ENCODE measurements at regions of chr16 and their contacts with region 1.

Region 1: GRCh38 chr16:49592546-49593423 is 219.2 kb downstream of the C16orf78 start:
- DNase-seq: peak; percentile 51 to 75 (median 70)
- H3K4me3 ChIP-seq: no peak overlapping the region
- H3K27ac ChIP-seq: no peak overlapping the region
- H3K4me1 ChIP-seq: peaks cover 12 to 60% (median 49%) of the 10 kb centered on the region in 4 experiments
- H3K27me3 ChIP-seq: no peaks in the 10 kb centered on the region

Region 2: GRCh38 chr16:49472598-49472997 is 120.2 kb before region 1 on chr16:
- CTCF ChIA-PET with region 1: no interaction called
- POLR2A ChIA-PET with region 1: no interaction called
- DNase-seq: no peak
- H3K4me3 ChIP-seq: no peak overlapping the region
- H3K27ac ChIP-seq: no peak overlapping the region
- H3K4me1 ChIP-seq: no peaks in the 10 kb centered on the region
- H3K27me3 ChIP-seq: no peaks in the 10 kb centered on the region

Region 3: GRCh38 chr16:49491771-49492761 is 100.7 kb before region 1 on chr16:
- CTCF ChIA-PET with region 1: interaction called, 20 read pairs
- POLR2A ChIA-PET with region 1: no interaction called
- DNase-seq: peak; percentile 38 to 57 (median 55)
- H3K4me3 ChIP-seq: peak overlapping the region in 3 of 7 experiments; percentile 41 to 51 (median 45)
- H3K27ac ChIP-seq: no peak overlapping the region
- H3K4me1 ChIP-seq: peaks cover 0 to 43% (median 25%) of the 10 kb centered on the region in 4 experiments
- H3K27me3 ChIP-seq: no peaks in the 10 kb centered on the region

Region 4: DNA sequence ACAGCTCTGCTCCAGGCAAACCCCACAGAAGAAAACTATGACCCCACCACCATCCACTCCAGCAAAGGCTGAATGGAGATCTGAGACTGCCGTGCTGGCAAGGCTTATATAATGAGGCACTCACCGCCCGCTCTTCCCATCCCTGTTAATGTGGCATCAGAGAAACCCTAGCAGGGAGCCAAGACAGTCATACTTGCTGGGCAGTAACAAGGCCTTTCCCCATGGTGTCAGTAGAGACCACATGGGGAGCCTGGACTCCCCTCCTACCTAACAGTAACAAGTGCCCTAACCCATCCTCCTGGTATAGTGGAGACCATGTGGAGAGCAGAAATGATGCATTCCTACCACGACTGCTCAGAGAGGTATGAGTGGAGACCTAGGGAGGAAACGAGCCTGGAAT is 16.0 kb after region 1 on chr16:
- CTCF ChIA-PET with region 1: interaction called, 12 read pairs
- POLR2A ChIA-PET with region 1: no interaction called
- DNase-seq: peak; percentile 57 to 76 (median 72)
- H3K4me3 ChIP-seq: peak overlapping the region in 1 of 7 experiments; percentile 14
- H3K27ac ChIP-seq: no peak overlapping the region
- H3K4me1 ChIP-seq: peaks cover 7 to 22% (median 13%) of the 10 kb centered on the region in 4 experiments
- H3K27me3 ChIP-seq: no peaks in the 10 kb centered on the region

Region 5: DNA sequence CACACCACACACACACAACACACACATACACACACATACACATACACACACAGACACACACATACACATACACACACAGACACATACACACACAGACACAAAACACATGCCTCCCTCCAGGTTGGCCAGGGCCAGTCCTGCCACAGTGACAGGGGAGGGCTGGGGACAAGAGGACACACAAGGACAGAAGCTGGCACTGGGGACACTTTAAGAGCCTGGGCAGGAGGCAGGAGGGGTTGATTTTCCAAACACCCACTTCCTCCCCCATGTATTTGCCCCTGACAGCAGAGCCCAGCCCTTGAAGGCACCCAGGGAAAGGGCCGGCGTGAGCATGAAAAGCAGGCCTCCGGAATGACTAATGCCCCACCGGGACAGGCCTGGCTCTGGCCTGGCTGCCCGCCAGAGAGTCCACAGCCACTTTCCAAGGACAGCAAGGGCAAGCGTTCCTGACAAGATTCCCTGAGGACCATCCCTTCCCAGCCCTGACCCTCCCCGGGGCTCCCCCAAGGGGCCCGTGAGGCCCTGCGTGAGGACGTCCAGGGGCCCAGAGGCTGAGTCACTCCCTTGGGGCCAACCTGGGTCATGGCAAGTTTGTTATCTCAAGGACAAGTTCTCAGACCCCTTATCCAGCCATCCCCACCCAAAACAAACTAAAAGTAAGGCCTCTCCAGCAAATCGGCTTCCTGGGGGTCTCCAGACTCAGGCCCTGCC is 27.5 kb after region 1 on chr16:
- CTCF ChIA-PET with region 1: no interaction called
- POLR2A ChIA-PET with region 1: no interaction called
- DNase-seq: no peak
- H3K4me3 ChIP-seq: no peak overlapping the region
- H3K27ac ChIP-seq: no peak overlapping the region
- H3K4me1 ChIP-seq: peaks cover 0 to 8% (median 0%) of the 10 kb centered on the region in 4 experiments
- H3K27me3 ChIP-seq: no peaks in the 10 kb centered on the region

Region 6: DNA sequence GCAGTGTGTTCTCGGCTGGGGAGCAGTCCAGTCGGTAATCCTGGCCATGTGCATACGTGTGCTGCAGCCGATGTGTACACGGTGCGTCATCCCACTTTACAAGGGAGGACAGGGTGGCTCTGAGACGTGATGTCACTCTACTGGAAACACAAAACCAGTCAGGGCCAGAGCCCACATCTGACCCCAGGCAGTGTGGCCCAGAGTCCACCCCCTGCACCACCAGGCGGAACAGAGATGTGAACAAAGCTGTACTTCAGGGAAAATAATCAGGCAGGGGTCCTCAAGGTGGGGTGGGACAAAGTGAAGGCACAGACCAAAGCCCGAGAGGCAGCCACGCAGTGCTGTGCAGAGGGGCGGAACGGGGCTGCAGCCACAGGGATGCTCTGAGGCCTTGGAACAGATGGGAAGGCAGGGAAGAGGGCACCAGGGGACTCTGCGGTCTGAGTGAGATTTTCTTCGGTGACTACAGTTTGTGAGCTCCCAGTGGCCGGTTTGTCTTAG is 81.6 kb after region 1 on chr16:
- CTCF ChIA-PET with region 1: no interaction called
- POLR2A ChIA-PET with region 1: no interaction called
- DNase-seq: no peak
- H3K4me3 ChIP-seq: no peak overlapping the region
- H3K27ac ChIP-seq: no peak overlapping the region
- H3K4me1 ChIP-seq: no peaks in the 10 kb centered on the region
- H3K27me3 ChIP-seq: no peaks in the 10 kb centered on the region